Activated B cell treated with CpG ODN at 0.5 μM for 24 hours (primary cell): ENCODE measurements at regions of chr12 and their contacts with region 1.

Region 1: GRCh38 chr12:6752921-6753771 is at the start of gene MLF2:
- DNase-seq: peak; percentile 98
- ATAC-seq: peak; percentile 91
- H3K4me3 Mint-ChIP-seq: peak within 1 kb of the TSS; percentile 93
- H3K27ac Mint-ChIP-seq: peak within 1 kb of the TSS; percentile 99
- H3K4me1 Mint-ChIP-seq: peaks cover 16% of the 10 kb centered on the region
- H3K27me3 Mint-ChIP-seq: no peaks in the 10 kb centered on the region
- CTCF ChIP-seq: peak; percentile 76
- total RNA-seq, gene MLF2: 102 and 105 TPM in 2 replicates

Region 2: GRCh38 chr12:6563448-6564050 is 189.6 kb before region 1 on chr12:
- CTCF ChIA-PET with region 1: interaction called, 3 read pairs
- POLR2A ChIA-PET with region 1: interaction called, 6 read pairs
- intact Hi-C with region 1: loop called (anchors 1 kb)
- DNase-seq: peak; percentile 57
- ATAC-seq: peak; percentile 25
- H3K4me3 Mint-ChIP-seq: no peak overlapping the region
- H3K27ac Mint-ChIP-seq: no peak overlapping the region
- H3K4me1 Mint-ChIP-seq: peaks cover 29% of the 10 kb centered on the region
- H3K27me3 Mint-ChIP-seq: no peaks in the 10 kb centered on the region
- CTCF ChIP-seq: peak; percentile 57

Region 3: GRCh38 chr12:6662906-6663742 is 90.0 kb before region 1 on chr12 and contains the start of gene ING4:
- CTCF ChIA-PET with region 1: no interaction called
- POLR2A ChIA-PET with region 1: interaction called, 9 read pairs
- intact Hi-C with region 1: loop called (anchors 1 kb)
- DNase-seq: peak; percentile 80
- ATAC-seq: peak; percentile 97
- H3K4me3 Mint-ChIP-seq: peak within 1 kb of the TSS; percentile 97
- H3K27ac Mint-ChIP-seq: peak within 1 kb of the TSS; percentile 95
- H3K4me1 Mint-ChIP-seq: peaks cover 27% of the 10 kb centered on the region
- H3K27me3 Mint-ChIP-seq: no peaks in the 10 kb centered on the region
- CTCF ChIP-seq: no peak
- total RNA-seq, gene ING4: 31.6 and 39.2 TPM in 2 replicates

Region 4: DNA sequence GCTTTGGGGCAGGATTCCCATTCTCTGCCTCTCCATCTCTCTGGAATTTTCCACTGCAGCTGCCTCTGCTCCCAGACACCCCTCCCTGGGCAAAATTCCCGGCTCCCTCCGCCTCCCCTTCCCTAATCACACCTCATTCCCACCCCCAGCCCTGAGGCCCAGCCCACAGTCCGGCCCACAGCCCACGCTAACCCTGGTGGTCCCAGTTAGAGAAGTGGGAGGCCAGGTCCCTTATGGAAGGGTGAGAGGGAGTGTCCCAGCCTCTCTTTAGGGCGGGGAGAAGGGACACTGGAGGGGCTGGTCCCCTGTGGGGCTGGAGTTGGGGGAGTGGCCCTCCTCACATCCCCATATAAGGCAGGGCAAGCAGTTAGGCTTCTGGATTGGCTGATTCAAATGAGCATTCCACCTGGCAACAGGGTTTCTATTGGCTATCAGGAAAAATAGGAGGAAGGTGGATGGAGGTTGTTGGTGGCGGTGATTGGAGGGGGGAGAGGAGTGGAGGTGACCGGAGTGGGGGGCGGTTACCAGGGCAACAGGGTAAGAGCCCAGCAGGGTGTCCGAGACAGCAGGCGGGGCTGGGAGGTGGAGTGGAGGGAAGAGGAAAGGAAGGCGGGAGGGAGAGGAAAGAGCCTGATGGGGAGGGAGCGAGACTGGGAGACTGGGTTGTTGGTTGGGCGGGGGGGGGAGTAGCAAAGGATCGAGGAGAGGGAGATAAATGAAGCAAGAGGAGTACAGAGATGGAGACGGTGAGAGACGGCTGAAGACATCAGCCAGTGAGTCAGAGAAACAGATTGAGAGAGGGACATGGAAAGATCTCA is 11.1 kb after region 1 on chr12:
- CTCF ChIA-PET with region 1: interaction called, 64 read pairs
- POLR2A ChIA-PET with region 1: interaction called, 26 read pairs
- intact Hi-C with region 1: loop called (anchors 1 kb)
- DNase-seq: peak; percentile 26
- ATAC-seq: peak; percentile 83
- H3K4me3 Mint-ChIP-seq: peak overlapping the region; percentile 55
- H3K27ac Mint-ChIP-seq: no peak overlapping the region
- H3K4me1 Mint-ChIP-seq: peaks cover 29% of the 10 kb centered on the region
- H3K27me3 Mint-ChIP-seq: peaks cover 31% of the 10 kb centered on the region
- CTCF ChIP-seq: no peak

Region 5: GRCh38 chr12:6867413-6868210 is 114.5 kb after region 1 on chr12 and contains the start of gene TPI1:
- CTCF ChIA-PET with region 1: interaction called, 10 read pairs
- POLR2A ChIA-PET with region 1: interaction called, 23 read pairs
- intact Hi-C with region 1: no loop called
- DNase-seq: peak; percentile 65
- ATAC-seq: peak; percentile 78
- H3K4me3 Mint-ChIP-seq: peak within 1 kb of the TSS; percentile 89
- H3K27ac Mint-ChIP-seq: peak within 1 kb of the TSS; percentile 84
- H3K4me1 Mint-ChIP-seq: peaks cover 51% of the 10 kb centered on the region
- H3K27me3 Mint-ChIP-seq: no peaks in the 10 kb centered on the region
- CTCF ChIP-seq: no peak
- total RNA-seq, gene TPI1: 306 and 318 TPM in 2 replicates

Region 6: GRCh38 chr12:6944381-6945186 is 191.4 kb after region 1 on chr12:
- CTCF ChIA-PET with region 1: no interaction called
- POLR2A ChIA-PET with region 1: interaction called, 14 read pairs
- intact Hi-C with region 1: loop called (anchors 5 kb)
- DNase-seq: peak; percentile 80
- ATAC-seq: peak; percentile 41
- H3K4me3 Mint-ChIP-seq: peak overlapping the region; percentile 91
- H3K27ac Mint-ChIP-seq: peak overlapping the region; percentile 96
- H3K4me1 Mint-ChIP-seq: peaks cover 72% of the 10 kb centered on the region
- H3K27me3 Mint-ChIP-seq: no peaks in the 10 kb centered on the region
- CTCF ChIP-seq: peak; percentile 59

Region 7: GRCh38 chr12:7060353-7060954 is 307.3 kb after region 1 on chr12 and contains the start of gene C1S:
- CTCF ChIA-PET with region 1: no interaction called
- POLR2A ChIA-PET with region 1: no interaction called
- intact Hi-C with region 1: no loop called
- DNase-seq: no peak
- ATAC-seq: no peak
- H3K4me3 Mint-ChIP-seq: no peak within 1 kb of the TSS
- H3K27ac Mint-ChIP-seq: no peak within 1 kb of the TSS
- H3K4me1 Mint-ChIP-seq: no peaks in the 10 kb centered on the region
- H3K27me3 Mint-ChIP-seq: peaks cover 41% of the 10 kb centered on the region
- CTCF ChIP-seq: no peak
- total RNA-seq, gene C1S: 0.71 and 1.6 TPM in 2 replicates